Calu3 (cell line): ENCODE measurements at regions of chr9 and their contacts with region 1.

Region 1: GRCh38 chr9:100352727-100353505 is at the start of gene TEX10:
- DNase-seq: peak; percentile 85
- H3K4me3 Mint-ChIP-seq: peak within 1 kb of the TSS; percentile 91
- H3K27ac Mint-ChIP-seq: peak within 1 kb of the TSS; percentile 91
- H3K4me1 Mint-ChIP-seq: peaks cover 21% of the 10 kb centered on the region
- H3K27me3 Mint-ChIP-seq: no peaks in the 10 kb centered on the region
- CTCF ChIP-seq: no peak
- total RNA-seq, gene TEX10: 15.3 and 17.7 TPM in 2 replicates

Region 2: GRCh38 chr9:100411472-100412283 is 58.8 kb after region 1 on chr9:
- CTCF ChIA-PET with region 1: no interaction called
- intact Hi-C with region 1: loop called (anchors 5 kb)
- DNase-seq: peak; percentile 78
- H3K4me3 Mint-ChIP-seq: peak overlapping the region; percentile 62
- H3K27ac Mint-ChIP-seq: peak overlapping the region; percentile 36
- H3K4me1 Mint-ChIP-seq: no peaks in the 10 kb centered on the region
- H3K27me3 Mint-ChIP-seq: no peaks in the 10 kb centered on the region
- CTCF ChIP-seq: no peak

Region 3: DNA sequence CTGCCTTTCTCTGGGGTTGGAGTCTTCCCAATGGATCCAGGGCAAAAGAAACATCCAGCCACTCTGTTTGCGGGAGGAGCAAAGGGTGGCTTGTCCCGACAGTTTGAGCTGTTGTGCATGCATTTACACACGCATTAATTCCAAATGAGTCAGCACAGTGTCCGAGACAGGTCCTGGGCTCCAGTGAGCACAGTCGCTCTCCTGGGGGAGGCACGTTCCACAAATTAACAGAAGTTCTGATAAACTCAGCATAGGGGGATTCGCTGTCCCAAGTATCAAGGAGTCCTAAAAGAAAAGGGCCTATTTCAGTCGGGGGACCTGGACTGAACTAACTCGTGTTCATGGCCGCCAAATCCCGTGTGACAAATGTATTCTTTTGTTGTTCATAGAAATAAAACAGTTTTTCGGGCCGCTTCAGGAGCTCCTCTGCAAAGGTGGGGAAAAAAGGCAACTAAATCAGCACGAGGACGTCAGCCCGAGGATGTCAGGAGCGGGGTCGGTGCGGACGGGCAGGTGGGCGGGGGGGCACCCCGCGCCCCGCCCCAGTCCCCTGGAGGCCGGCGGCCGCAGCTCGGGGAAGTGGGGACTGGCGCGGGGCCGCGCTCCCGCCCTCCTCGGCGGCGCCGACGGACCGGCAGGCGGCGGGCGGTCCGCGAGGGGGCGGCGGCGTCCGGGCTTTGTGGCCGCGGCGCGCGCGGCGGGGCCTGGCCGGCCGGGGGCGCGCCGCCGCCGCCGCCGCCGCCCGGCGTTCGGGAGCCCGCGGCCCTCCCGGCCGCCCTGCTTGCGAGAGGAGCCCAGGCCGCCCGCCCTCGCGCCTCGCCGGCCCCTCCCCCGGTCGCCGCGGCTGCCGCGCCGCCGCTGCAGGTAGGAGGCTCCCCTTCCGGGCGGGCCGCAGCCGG is 73.9 kb after region 1 on chr9 and contains the start of gene MSANTD3:
- CTCF ChIA-PET with region 1: no interaction called
- intact Hi-C with region 1: loop called (anchors 5 kb)
- DNase-seq: peak; percentile 58
- H3K4me3 Mint-ChIP-seq: peak within 1 kb of the TSS; percentile 73
- H3K27ac Mint-ChIP-seq: peak within 1 kb of the TSS; percentile 94
- H3K4me1 Mint-ChIP-seq: peaks cover 32% of the 10 kb centered on the region
- H3K27me3 Mint-ChIP-seq: no peaks in the 10 kb centered on the region
- CTCF ChIP-seq: no peak
- total RNA-seq, gene MSANTD3: 16.3 and 23.5 TPM in 2 replicates